CD8-positive, alpha-beta T cell (primary cell): ENCODE measurements at regions of chr18 and their contacts with region 1.

Region 1: GRCh38 chr18:26022585-26022984 is 67.8 kb downstream of the SS18 start:
- DNase-seq: no peak
- ATAC-seq: no peak
- H3K4me3 ChIP-seq: no peak overlapping the region
- H3K4me3 Mint-ChIP-seq: no peak overlapping the region
- H3K27ac ChIP-seq: no peak overlapping the region
- H3K27ac Mint-ChIP-seq: no peak overlapping the region
- H3K4me1 ChIP-seq: no peaks in the 10 kb centered on the region
- H3K4me1 Mint-ChIP-seq: peaks cover 9% of the 10 kb centered on the region
- H3K27me3 ChIP-seq: no peaks in the 10 kb centered on the region
- H3K27me3 Mint-ChIP-seq: no peaks in the 10 kb centered on the region
- CTCF ChIP-seq: no peak

Region 2: DNA sequence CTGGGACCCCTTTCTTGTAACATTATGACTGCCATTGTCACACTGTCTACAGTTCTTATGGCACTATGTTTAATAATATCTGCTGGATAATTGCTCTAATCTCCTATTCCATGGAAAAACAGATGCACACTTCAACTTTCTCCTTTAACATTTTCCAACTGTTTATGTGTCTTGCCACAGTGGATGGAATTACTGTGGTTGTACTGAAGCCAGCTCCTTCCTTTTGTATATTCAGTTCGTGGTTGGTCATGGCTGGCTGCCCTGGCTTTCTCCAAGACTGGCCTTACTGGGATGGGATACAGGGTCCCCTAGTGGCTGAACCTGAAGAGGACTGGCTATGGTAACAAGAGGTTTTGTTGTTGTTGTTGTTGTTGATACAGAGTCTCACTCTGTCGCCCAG is 46.0 kb before region 1 on chr18:
- CTCF ChIA-PET with region 1: no interaction called
- POLR2A ChIA-PET with region 1: no interaction called
- intact Hi-C with region 1: no loop called
- DNase-seq: no peak
- ATAC-seq: no peak
- H3K4me3 ChIP-seq: no peak overlapping the region
- H3K4me3 Mint-ChIP-seq: no peak overlapping the region
- H3K27ac ChIP-seq: no peak overlapping the region
- H3K27ac Mint-ChIP-seq: no peak overlapping the region
- H3K4me1 ChIP-seq: no peaks in the 10 kb centered on the region
- H3K4me1 Mint-ChIP-seq: peaks cover 4% of the 10 kb centered on the region
- H3K27me3 ChIP-seq: no peaks in the 10 kb centered on the region
- H3K27me3 Mint-ChIP-seq: no peaks in the 10 kb centered on the region
- CTCF ChIP-seq: no peak

Region 3: DNA sequence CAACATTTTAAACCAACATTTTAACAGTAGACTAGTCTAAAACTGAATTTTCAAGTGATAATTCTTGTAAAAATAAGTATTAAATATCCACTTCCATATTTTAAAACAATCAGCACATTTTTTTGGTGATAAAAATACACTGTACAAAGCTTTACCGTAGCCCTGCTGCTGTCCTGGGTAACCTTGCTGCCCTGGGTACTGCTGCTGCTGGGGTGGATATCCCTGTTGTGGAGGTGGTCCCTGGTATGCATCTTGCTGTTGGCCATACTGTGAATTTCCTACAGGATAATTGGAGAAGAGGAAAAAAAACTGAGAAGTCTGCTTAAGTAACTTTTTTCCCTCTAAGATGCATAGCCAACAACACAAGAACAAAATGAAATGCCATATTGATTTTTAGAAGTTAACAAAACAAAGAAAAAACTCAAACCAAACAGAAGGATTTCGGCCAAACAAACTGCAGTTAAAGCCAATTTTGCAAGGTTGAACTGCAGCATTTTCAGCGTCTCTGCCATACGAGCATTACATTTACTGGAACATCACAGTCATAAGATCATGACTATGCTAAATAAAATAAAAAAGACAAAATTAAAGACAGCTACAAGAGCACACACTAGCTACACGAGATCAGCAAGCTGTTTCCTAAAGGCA is 12.4 kb after region 1 on chr18:
- CTCF ChIA-PET with region 1: no interaction called
- POLR2A ChIA-PET with region 1: no interaction called
- intact Hi-C with region 1: no loop called
- DNase-seq: no peak
- ATAC-seq: no peak
- H3K4me3 ChIP-seq: no peak overlapping the region
- H3K4me3 Mint-ChIP-seq: no peak overlapping the region
- H3K27ac ChIP-seq: no peak overlapping the region
- H3K27ac Mint-ChIP-seq: no peak overlapping the region
- H3K4me1 ChIP-seq: no peaks in the 10 kb centered on the region
- H3K4me1 Mint-ChIP-seq: peaks cover 4% of the 10 kb centered on the region
- H3K27me3 ChIP-seq: no peaks in the 10 kb centered on the region
- H3K27me3 Mint-ChIP-seq: no peaks in the 10 kb centered on the region
- CTCF ChIP-seq: no peak

Region 4: DNA sequence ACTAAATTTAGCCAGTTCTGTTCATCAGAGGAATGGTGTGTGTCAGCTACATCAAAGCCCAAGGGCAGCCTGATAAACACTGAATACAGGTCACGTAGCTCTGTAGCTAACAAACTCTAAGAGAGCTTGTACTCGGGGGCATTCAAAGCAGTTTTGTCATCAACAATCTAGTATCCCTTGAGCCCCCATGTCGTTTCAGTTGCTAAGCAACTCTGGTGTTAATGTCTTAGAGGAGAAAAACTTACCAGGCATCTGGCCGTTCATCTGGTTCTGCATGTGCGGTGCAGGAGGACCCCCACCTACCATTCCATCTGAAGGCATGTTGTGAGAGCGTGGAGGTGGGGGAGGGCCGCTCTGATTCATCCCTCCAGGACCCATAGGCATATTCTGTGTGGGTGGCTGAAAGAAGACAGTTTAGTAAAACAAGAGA is 34.8 kb after region 1 on chr18:
- CTCF ChIA-PET with region 1: no interaction called
- POLR2A ChIA-PET with region 1: no interaction called
- intact Hi-C with region 1: loop called in 1 of 2 experiments (anchors 5 kb)
- DNase-seq: no peak
- ATAC-seq: no peak
- H3K4me3 ChIP-seq: no peak overlapping the region
- H3K4me3 Mint-ChIP-seq: no peak overlapping the region
- H3K27ac ChIP-seq: no peak overlapping the region
- H3K27ac Mint-ChIP-seq: peak overlapping the region; percentile 63
- H3K4me1 ChIP-seq: no peaks in the 10 kb centered on the region
- H3K4me1 Mint-ChIP-seq: peaks cover 30% of the 10 kb centered on the region
- H3K27me3 ChIP-seq: no peaks in the 10 kb centered on the region
- H3K27me3 Mint-ChIP-seq: no peaks in the 10 kb centered on the region
- CTCF ChIP-seq: no peak

Region 5: GRCh38 chr18:26121476-26121875 is 98.9 kb after region 1 on chr18:
- CTCF ChIA-PET with region 1: no interaction called
- POLR2A ChIA-PET with region 1: no interaction called
- intact Hi-C with region 1: no loop called
- DNase-seq: no peak
- ATAC-seq: no peak
- H3K4me3 ChIP-seq: no peak overlapping the region
- H3K4me3 Mint-ChIP-seq: no peak overlapping the region
- H3K27ac ChIP-seq: no peak overlapping the region
- H3K27ac Mint-ChIP-seq: no peak overlapping the region
- H3K4me1 ChIP-seq: no peaks in the 10 kb centered on the region
- H3K4me1 Mint-ChIP-seq: peaks cover 8% of the 10 kb centered on the region
- H3K27me3 ChIP-seq: peaks cover 0 to 3% of the 10 kb centered on the region in 2 experiments
- H3K27me3 Mint-ChIP-seq: peaks cover 5% of the 10 kb centered on the region
- CTCF ChIP-seq: no peak

Region 6: DNA sequence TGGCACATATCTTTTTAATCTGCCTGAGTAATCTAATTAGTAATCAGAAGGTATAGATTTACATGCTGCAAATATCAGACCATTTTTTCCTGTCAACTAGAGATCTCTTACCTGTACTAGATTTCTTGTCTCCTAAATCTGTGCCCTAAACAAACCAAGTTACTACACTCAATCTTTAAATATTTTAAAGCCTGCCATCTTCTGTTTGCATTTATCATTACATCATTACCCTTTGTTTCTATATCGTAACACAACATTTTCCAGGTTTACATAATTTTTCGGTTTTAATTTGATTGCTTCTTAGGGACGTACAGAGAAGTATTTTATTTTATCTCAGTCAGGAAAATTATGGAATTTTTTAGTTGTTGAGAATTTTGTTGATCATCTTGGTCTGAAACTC is 136.8 kb after region 1 on chr18:
- CTCF ChIA-PET with region 1: no interaction called
- POLR2A ChIA-PET with region 1: no interaction called
- intact Hi-C with region 1: loop called in 1 of 2 experiments (anchors 10 kb)
- DNase-seq: peak in 2 of 9 experiments; percentile 29 to 41
- ATAC-seq: no peak
- H3K4me3 ChIP-seq: no peak overlapping the region
- H3K4me3 Mint-ChIP-seq: no peak overlapping the region
- H3K27ac ChIP-seq: no peak overlapping the region
- H3K27ac Mint-ChIP-seq: no peak overlapping the region
- H3K4me1 ChIP-seq: no peaks in the 10 kb centered on the region
- H3K4me1 Mint-ChIP-seq: peaks cover 6% of the 10 kb centered on the region
- H3K27me3 ChIP-seq: no peaks in the 10 kb centered on the region
- H3K27me3 Mint-ChIP-seq: no peaks in the 10 kb centered on the region
- CTCF ChIP-seq: peak; percentile 57